H1 (cell line): ENCODE measurements at regions of chr19 and their contacts with region 1.

Region 1: GRCh38 chr19:43754503-43755255 is at the start of gene SMG9:
- DNase-seq: peak; percentile 93 to 97
- H3K4me3 ChIP-seq: peak within 1 kb of the TSS; percentile 67 to 88 (median 76)
- H3K27ac ChIP-seq: peak within 1 kb of the TSS; percentile 90
- H3K4me1 ChIP-seq: no peaks in the 10 kb centered on the region; a peak in 1 of 7 replicates
- H3K27me3 ChIP-seq: no peaks in the 10 kb centered on the region
- CTCF ChIP-seq: no peak
- EP300 ChIP-seq: no peak; a peak in 1 of 3 replicates
- POLR2A ChIP-seq: peak; percentile 73 to 84; a peak in 2 of 3 replicates
- RAD21 ChIP-seq: no peak
- total RNA-seq, gene SMG9: 28.7 and 34.0 TPM in 2 replicates

Region 2: DNA sequence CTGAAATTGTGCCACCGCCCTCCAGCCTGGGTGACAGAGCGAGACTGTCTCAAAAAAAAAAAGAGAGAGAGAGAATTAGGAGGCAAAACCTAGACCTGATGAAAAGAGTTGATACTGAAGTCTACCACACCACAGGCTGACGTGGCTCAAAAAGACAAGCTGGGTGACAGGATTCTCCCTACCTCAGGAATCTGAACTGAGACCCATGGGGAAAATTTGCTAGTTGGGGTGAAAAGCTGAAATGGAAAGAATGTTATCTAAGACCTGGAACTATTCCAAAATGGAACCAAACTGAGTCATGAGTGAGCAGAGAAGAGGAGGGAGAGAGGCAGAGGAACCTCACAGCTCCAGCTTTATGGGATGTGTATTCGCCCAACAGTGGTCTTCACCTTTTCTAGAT is 11.7 kb before region 1 on chr19:
- CTCF ChIA-PET with region 1: interaction called, 64 read pairs
- POLR2A ChIA-PET with region 1: interaction called, 6 read pairs
- DNase-seq: no peak
- H3K4me3 ChIP-seq: no peak overlapping the region
- H3K27ac ChIP-seq: no peak overlapping the region
- H3K4me1 ChIP-seq: no peaks in the 10 kb centered on the region
- H3K27me3 ChIP-seq: no peaks in the 10 kb centered on the region
- CTCF ChIP-seq: no peak
- EP300 ChIP-seq: no peak
- POLR2A ChIP-seq: no peak
- RAD21 ChIP-seq: no peak

Region 3: GRCh38 chr19:43765109-43765876 is 10.6 kb after region 1 on chr19:
- CTCF ChIA-PET with region 1: interaction called, 703 read pairs
- POLR2A ChIA-PET with region 1: interaction called, 33 read pairs
- DNase-seq: no peak
- H3K4me3 ChIP-seq: no peak overlapping the region
- H3K27ac ChIP-seq: no peak overlapping the region
- H3K4me1 ChIP-seq: peaks cover 0 to 4% (median 2%) of the 10 kb centered on the region in 4 experiments; a peak in 3 of 7 replicates
- H3K27me3 ChIP-seq: peaks cover 0 to 4% (median 0%) of the 10 kb centered on the region in 4 experiments; a peak in 2 of 7 replicates
- CTCF ChIP-seq: no peak
- EP300 ChIP-seq: no peak
- POLR2A ChIP-seq: no peak
- RAD21 ChIP-seq: no peak

Region 4: DNA sequence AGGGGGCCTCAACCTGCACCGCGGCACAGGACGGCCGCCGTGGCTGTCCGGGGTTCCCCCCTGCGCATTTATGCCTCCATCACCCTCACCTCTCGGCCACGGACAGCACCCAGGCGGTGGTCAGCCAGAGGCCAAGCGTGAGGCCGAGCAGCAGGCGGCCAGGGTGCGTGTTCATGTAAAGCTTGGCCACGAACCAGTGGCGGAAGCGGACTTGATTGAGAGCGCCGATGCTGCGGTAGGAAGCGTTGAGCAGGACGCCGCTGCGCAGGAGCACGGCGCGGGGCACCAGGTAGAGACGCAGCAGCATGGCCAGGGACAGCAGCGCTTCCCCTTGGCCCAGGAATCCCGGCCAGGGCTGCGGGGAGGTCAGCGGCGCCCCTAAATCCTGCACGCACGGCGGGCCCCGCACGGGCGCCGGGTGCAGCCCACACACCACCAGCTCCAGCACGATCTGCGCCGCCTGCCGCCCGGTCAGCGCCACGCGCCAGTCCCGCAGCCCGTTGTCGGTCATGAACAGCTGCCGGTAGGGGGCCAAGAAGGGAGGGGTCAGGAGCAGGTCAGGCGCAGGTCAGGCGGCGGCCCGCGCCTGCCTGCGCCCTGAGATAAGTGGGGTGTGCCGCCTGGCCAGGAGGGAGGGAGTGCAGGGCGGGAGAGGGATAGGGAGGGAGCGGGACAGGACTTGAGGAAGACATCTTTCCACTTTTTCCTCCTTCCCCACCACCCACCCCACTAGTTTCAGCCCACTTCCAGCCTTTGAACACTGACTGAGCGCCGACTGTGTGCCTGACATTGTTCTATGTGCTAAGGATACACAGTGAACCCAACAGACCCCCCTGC is 19.6 kb after region 1 on chr19:
- CTCF ChIA-PET with region 1: interaction called, 703 read pairs
- POLR2A ChIA-PET with region 1: interaction called, 23 read pairs
- DNase-seq: peak in 1 of 2 experiments; percentile 84
- H3K4me3 ChIP-seq: peak overlapping the region; percentile 30 to 67 (median 58)
- H3K27ac ChIP-seq: no peak overlapping the region
- H3K4me1 ChIP-seq: peaks cover 4 to 13% (median 8%) of the 10 kb centered on the region in 4 experiments
- H3K27me3 ChIP-seq: peaks cover 11 to 35% (median 28%) of the 10 kb centered on the region in 4 experiments
- CTCF ChIP-seq: peak; percentile 42 to 80 (median 75)
- EP300 ChIP-seq: no peak
- POLR2A ChIP-seq: no peak
- RAD21 ChIP-seq: peak; percentile 27 to 36; a peak in 2 of 4 replicates

Region 5: GRCh38 chr19:43784981-43785808 is 30.5 kb after region 1 on chr19:
- CTCF ChIA-PET with region 1: interaction called, 703 read pairs
- POLR2A ChIA-PET with region 1: no interaction called
- DNase-seq: peak in 1 of 2 experiments; percentile 64
- H3K4me3 ChIP-seq: no peak overlapping the region
- H3K27ac ChIP-seq: no peak overlapping the region
- H3K4me1 ChIP-seq: peaks cover 0 to 2% (median under 1%) of the 10 kb centered on the region in 4 experiments; a peak in 3 of 7 replicates
- H3K27me3 ChIP-seq: no peaks in the 10 kb centered on the region; a peak in 1 of 7 replicates
- CTCF ChIP-seq: peak; percentile 66 to 98 (median 95)
- EP300 ChIP-seq: no peak
- POLR2A ChIP-seq: no peak
- RAD21 ChIP-seq: peak; percentile 95 to 96